Calu3 (cell line): ENCODE measurements at regions of chr17 and their contacts with region 1.

Region 1: DNA sequence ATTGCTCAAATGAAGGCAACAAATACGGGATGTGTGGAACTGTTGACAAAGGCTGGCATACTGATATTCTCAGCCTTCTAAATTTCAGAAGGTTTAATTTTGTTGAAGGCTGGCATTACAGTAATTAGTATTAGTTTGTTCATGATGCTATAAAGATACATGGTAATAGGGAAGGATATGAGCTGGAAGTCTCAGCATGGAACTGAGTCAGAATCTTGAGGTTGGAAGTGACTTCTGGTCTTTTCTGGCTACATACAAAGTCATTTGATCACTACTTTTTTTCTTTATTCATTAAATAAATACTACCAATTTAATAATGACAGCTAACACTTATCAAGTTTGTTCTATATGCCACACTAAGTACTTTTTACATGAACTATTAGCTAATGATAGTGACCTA is 22.6 kb downstream of the RABEP1 start:
- DNase-seq: no peak
- H3K4me3 Mint-ChIP-seq: no peak overlapping the region
- H3K27ac Mint-ChIP-seq: no peak overlapping the region
- H3K4me1 Mint-ChIP-seq: no peaks in the 10 kb centered on the region
- H3K27me3 Mint-ChIP-seq: no peaks in the 10 kb centered on the region
- CTCF ChIP-seq: no peak

Region 2: DNA sequence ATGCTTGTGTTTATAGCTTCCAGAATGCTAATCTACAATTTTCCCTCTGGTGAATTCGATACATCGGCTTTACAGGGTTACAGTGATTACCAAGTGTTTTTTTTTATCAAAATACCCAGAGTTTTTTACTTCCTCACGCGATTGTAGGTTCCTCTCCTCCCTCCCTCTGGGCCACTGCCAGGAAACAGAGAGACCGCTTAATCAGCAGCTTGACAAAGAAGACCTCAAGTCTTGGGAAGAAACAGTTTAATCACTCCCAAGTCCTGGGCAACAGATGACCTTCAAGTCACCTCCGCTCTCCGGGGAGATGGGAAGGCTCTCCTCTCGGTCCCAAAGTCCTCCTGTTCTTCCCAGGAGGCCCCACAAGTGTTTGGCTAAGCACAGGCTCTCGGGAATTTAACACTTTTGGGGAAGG is 696.9 kb before region 1 on chr17:
- CTCF ChIA-PET with region 1: no interaction called
- intact Hi-C with region 1: no loop called
- DNase-seq: no peak
- H3K4me3 Mint-ChIP-seq: no peak overlapping the region
- H3K27ac Mint-ChIP-seq: no peak overlapping the region
- H3K4me1 Mint-ChIP-seq: no peaks in the 10 kb centered on the region
- H3K27me3 Mint-ChIP-seq: peaks cover 70% of the 10 kb centered on the region
- CTCF ChIP-seq: no peak

Region 3: DNA sequence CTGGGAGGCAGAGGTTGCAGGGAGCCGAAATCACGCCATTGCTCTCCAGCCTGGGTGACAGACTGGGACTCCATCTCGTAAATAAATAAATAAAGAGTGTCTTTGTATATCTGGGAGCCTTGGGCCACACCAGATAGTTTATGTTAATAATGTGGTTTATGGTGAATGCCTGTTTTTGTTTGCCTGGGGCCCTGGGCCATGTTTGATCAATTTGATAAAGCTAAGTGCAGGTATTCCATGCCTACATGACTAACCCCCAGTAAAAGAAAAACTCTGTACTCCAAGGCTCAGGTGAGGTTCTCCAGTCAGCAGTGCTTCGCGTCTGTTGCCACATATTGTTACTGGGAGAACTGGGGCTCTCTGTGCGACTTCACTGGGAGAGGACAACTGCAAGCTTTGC is 85.1 kb before region 1 on chr17:
- CTCF ChIA-PET with region 1: no interaction called
- intact Hi-C with region 1: no loop called
- DNase-seq: no peak
- H3K4me3 Mint-ChIP-seq: no peak overlapping the region
- H3K27ac Mint-ChIP-seq: no peak overlapping the region
- H3K4me1 Mint-ChIP-seq: no peaks in the 10 kb centered on the region
- H3K27me3 Mint-ChIP-seq: no peaks in the 10 kb centered on the region
- CTCF ChIP-seq: no peak

Region 4: DNA sequence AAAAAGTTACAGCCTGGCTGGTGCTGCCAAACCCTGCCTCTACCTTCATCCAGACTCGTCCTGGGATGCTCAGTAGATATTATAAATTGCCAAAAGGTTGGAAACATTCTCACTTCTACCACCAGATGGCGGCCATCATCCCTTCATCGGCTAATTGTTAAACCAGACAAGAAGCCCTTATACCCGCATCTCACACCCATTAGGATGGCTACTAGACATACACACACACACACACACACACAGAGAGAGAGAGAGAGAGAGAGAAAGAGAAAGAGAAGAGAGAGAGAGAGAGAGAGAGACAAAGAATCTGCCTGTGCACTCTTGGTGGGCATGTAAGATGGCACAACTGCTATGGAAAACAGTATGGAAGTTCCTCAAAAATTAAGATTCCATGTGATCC is 55.0 kb before region 1 on chr17:
- CTCF ChIA-PET with region 1: interaction called, 9 read pairs
- intact Hi-C with region 1: loop called (anchors 1 kb)
- DNase-seq: peak; percentile 58
- H3K4me3 Mint-ChIP-seq: no peak overlapping the region
- H3K27ac Mint-ChIP-seq: no peak overlapping the region
- H3K4me1 Mint-ChIP-seq: no peaks in the 10 kb centered on the region
- H3K27me3 Mint-ChIP-seq: no peaks in the 10 kb centered on the region
- CTCF ChIP-seq: no peak